Prostate gland (tissue), 2 donors: ENCODE measurements at regions of chr1 and their contacts with region 1.

Region 1: GRCh38 chr1:203871107-203871875 is 9.9 kb downstream of the SNRPE start:
- DNase-seq: peak; percentile 60
- H3K4me3 ChIP-seq: no peak overlapping the region
- H3K27ac ChIP-seq: peak overlapping the region; percentile 82
- H3K4me1 ChIP-seq: peaks cover 2% of the 10 kb centered on the region
- H3K27me3 ChIP-seq: no peaks in the 10 kb centered on the region
- CTCF ChIP-seq: peak; percentile 80 to 99 (median 90)
- POLR2A ChIP-seq: no peak

Region 2: GRCh38 chr1:204128964-204129896 is 257.9 kb after region 1 on chr1:
- intact Hi-C with region 1: loop called (anchors 1 kb)
- DNase-seq: peak; percentile 93
- H3K4me3 ChIP-seq: peak overlapping the region; percentile 21 to 33
- H3K27ac ChIP-seq: peak overlapping the region; percentile 86 to 93
- H3K4me1 ChIP-seq: peaks cover 38% of the 10 kb centered on the region
- H3K27me3 ChIP-seq: no peaks in the 10 kb centered on the region
- CTCF ChIP-seq: peak; percentile 91 to 98 (median 94)
- POLR2A ChIP-seq: peak; percentile 32